Ascending aorta (tissue), 2 donors: ENCODE measurements at regions of chr6 and their contacts with region 1.

Region 1: GRCh38 chr6:118325220-118325860 is 222.8 kb upstream of the PLN start:
- DNase-seq: peak; percentile 40 to 84
- H3K4me3 ChIP-seq: no peak overlapping the region
- H3K27ac ChIP-seq: peak overlapping the region; percentile 74 to 79
- H3K4me1 ChIP-seq: peaks cover 7 to 29% of the 10 kb centered on the region in 2 donors
- H3K27me3 ChIP-seq: no peaks in the 10 kb centered on the region
- CTCF ChIP-seq: no peak

Region 2: DNA sequence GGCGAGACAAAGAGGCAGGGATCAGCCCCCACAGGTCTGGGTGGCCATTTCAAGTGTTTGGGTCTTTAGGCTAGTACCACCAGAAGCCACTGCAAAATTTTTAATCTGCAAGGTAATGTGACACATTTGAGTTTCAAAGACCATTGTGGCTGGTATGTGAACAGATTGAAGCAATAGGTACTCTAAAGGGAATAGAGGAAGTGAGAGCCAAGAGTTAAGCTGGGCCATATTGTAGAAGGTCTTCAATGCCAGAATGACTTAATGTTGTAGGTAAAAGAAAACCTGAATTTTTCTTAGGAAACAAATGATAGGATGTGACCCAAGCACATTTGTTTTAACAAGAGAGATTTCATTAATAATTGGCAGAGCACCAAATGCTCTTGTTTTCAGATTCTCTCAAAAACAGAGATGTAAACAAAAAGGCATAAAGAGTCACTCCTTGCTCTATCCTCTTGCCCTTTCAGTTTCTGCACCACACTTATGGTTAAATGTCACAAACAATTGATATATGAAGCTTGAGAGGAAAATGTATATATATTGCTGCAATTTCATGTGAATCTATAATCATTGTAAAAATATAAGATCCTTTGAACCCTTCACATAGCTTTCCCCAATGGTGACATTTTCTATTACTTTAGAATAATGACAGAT is 84.3 kb before region 1 on chr6:
- intact Hi-C with region 1: no loop called
- DNase-seq: no peak
- H3K4me3 ChIP-seq: no peak overlapping the region
- H3K27ac ChIP-seq: no peak overlapping the region
- H3K4me1 ChIP-seq: no peaks in the 10 kb centered on the region
- H3K27me3 ChIP-seq: no peaks in the 10 kb centered on the region
- CTCF ChIP-seq: no peak

Region 3: GRCh38 chr6:118292558-118292957 is 32.8 kb before region 1 on chr6:
- intact Hi-C with region 1: loop called (anchors 5 kb)
- DNase-seq: no peak
- H3K4me3 ChIP-seq: no peak overlapping the region
- H3K27ac ChIP-seq: peak overlapping the region; percentile 89
- H3K4me1 ChIP-seq: peaks cover 18 to 59% of the 10 kb centered on the region in 2 donors
- H3K27me3 ChIP-seq: no peaks in the 10 kb centered on the region
- CTCF ChIP-seq: no peak

Region 4: DNA sequence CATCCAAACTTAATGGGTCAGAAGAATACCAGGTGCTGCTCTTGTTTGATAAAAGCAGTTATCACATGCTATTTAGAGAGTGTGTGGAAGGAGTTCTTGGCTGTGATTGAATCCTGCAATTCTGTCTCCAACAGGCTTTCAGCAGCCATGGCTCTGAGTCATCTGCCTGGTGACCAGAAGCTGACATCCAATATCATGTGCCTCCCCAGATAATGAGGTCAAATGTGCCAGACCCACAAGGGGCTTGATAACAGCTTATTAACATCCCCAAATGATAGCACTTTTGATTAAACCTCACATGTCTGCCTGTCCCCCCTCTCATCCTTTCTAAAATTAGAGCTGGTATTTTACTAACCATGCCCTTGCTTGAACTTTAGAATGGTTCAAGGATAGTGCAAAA is 47.1 kb after region 1 on chr6:
- intact Hi-C with region 1: loop called (anchors 5 kb)
- DNase-seq: no peak
- H3K4me3 ChIP-seq: no peak overlapping the region
- H3K27ac ChIP-seq: no peak overlapping the region
- H3K4me1 ChIP-seq: no peaks in the 10 kb centered on the region
- H3K27me3 ChIP-seq: no peaks in the 10 kb centered on the region
- CTCF ChIP-seq: no peak

Region 5: DNA sequence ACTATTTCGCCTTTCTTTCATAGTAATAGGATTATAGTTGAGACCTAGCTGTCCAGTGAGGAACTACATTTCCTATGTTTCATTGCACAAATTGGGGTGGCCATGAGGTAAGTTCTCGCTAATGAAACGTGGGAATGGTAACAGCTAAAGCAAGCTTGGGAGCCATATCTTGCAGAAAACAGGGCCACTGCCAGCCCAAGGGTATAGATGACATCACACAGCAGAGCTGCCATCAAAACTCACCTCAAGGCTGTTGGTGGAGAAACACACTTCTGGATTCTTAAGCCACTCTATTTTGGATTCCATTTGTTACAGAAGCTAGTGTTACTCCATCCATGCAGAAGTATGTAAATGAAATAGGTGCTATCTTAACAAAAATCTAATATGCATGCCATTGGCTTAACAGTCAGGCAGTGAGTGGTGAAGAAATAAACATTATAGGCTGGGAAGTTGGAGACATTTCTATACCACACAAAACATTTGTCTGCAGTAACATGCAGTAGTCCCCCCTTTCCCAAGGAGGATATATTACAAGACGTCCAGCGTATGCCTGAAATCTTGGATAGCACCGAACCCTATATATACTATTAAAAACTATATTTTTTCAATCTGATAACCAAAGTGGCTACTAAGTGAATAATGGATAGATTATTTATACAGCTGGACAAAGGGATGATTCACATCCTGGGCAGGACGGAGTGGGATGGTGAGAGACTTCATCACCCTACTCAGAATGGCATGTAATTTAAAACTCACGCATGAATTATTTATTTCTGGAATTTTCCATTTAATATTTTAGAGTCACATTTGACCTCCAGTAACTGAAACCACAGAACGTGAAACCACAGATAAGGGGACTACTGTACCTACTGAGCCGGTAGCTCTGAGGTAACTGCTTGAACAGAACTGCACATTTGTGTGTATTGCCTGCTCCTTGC is 62.7 kb after region 1 on chr6:
- intact Hi-C with region 1: loop called (anchors 5 kb)
- DNase-seq: no peak
- H3K4me3 ChIP-seq: no peak overlapping the region
- H3K27ac ChIP-seq: peak overlapping the region; percentile 26 to 51
- H3K4me1 ChIP-seq: peaks cover 0 to 8% of the 10 kb centered on the region in 2 donors
- H3K27me3 ChIP-seq: no peaks in the 10 kb centered on the region
- CTCF ChIP-seq: no peak

Region 6: GRCh38 chr6:118542184-118542952 is 217.0 kb after region 1 on chr6:
- intact Hi-C with region 1: loop called (anchors 2 kb)
- DNase-seq: no peak
- H3K4me3 ChIP-seq: no peak overlapping the region
- H3K27ac ChIP-seq: peak overlapping the region; percentile 63 to 89
- H3K4me1 ChIP-seq: peaks cover 3 to 50% of the 10 kb centered on the region in 2 donors
- H3K27me3 ChIP-seq: no peaks in the 10 kb centered on the region
- CTCF ChIP-seq: no peak